KBM-7 (cell line): ENCODE measurements at regions of chr15 and their contacts with region 1.

Region 1: GRCh38 chr15:75307778-75308391 is 25.2 kb downstream of the GOLGA6D start:
- DNase-seq: peak; percentile 84

Region 2: GRCh38 chr15:74799856-74800547 is 507.9 kb before region 1 on chr15:
- in situ Hi-C with region 1: loop called (anchors 25 kb)
- DNase-seq: peak; percentile 96

Region 3: GRCh38 chr15:75468913-75469598 is 161.2 kb after region 1 on chr15:
- in situ Hi-C with region 1: no loop called
- DNase-seq: peak; percentile 29